AG04450 (cell line): ENCODE measurements at regions of chr4 and their contacts with region 1.

Region 1: GRCh38 chr4:130349745-130350144 is 1253.8 kb downstream of the C4orf33 start:
- DNase-seq: no peak
- H3K4me3 ChIP-seq: no peak overlapping the region
- H3K27ac ChIP-seq: no peak overlapping the region
- H3K27me3 ChIP-seq: no peaks in the 10 kb centered on the region
- CTCF ChIP-seq: no peak

Region 2: GRCh38 chr4:130172156-130172555 is 177.6 kb before region 1 on chr4:
- CTCF ChIA-PET with region 1: no interaction called
- POLR2A ChIA-PET with region 1: no interaction called
- DNase-seq: no peak
- H3K4me3 ChIP-seq: no peak overlapping the region
- H3K27ac ChIP-seq: no peak overlapping the region
- H3K27me3 ChIP-seq: no peaks in the 10 kb centered on the region
- CTCF ChIP-seq: no peak

Region 3: DNA sequence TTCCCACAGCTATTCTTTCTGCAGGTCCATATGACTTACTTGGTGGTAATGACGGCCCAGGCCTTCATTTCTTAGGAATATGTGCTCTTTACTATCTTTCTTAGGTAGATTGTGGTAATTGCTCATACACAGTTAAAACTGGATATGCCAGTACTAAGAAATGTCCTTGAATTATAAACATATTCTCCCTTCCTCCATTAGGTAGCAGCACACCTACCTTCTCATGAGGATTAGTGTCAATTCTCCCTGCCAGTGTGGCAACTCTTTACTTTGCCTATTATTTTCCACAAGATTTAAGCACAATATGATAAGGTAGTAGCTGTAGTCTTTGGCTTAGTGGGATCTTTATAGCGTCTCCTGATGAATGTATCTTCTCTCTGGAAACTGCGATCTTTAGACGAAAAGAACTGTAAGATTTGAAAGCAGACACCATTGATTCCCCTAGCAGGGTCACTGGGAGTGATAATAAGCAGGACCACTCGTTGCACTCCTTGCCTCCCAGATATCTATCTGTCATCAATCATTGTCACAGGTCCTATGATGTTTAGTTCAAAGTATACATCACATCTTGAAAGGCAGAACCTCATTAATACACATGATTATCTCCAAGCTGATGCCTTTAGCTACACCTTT is 13.0 kb before region 1 on chr4:
- CTCF ChIA-PET with region 1: interaction called, 10 read pairs
- POLR2A ChIA-PET with region 1: no interaction called
- DNase-seq: no peak
- H3K4me3 ChIP-seq: no peak overlapping the region
- H3K27ac ChIP-seq: no peak overlapping the region
- H3K27me3 ChIP-seq: no peaks in the 10 kb centered on the region
- CTCF ChIP-seq: peak; percentile 65